Calu3 (cell line): ENCODE measurements at regions of chr11 and their contacts with region 1.

Region 1: DNA sequence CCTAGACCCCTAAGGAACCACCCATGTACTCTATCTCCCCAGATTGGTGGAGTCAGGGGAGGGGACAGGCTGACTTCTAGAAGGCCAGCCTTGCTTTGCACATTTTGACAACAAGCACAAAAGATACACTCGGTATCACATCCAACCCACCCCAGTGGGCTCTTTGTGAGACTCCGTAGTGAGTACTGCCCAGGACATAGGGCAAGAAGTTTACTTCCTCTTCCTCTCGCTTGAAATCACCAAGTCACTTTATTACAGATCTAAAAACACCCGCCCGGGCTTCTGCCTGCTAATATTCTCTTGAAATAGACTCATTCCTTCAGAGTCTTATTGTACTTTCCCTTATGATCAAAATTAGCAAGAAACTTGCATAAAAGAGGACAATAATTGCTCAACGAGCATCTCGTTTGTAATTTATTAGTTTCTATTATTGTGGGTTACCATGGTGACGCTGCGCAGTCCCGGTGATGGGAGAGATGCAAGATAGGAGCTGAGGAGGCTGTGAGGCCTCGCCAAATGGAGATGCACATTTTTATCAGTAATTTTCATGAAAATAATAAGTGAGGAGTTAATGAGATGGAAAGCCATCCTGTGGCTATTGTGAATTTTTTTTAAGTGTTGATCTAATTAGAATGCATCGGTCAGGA is 96.9 kb downstream of the FEZ1 start:
- DNase-seq: no peak
- H3K4me3 Mint-ChIP-seq: no peak overlapping the region
- H3K27ac Mint-ChIP-seq: no peak overlapping the region
- H3K4me1 Mint-ChIP-seq: no peaks in the 10 kb centered on the region
- H3K27me3 Mint-ChIP-seq: peaks cover 99% of the 10 kb centered on the region
- CTCF ChIP-seq: no peak

Region 2: GRCh38 chr11:125164422-125165110 is 234.6 kb before region 1 on chr11 and contains the start of gene PKNOX2:
- CTCF ChIA-PET with region 1: no interaction called
- intact Hi-C with region 1: loop called (anchors 5 kb)
- DNase-seq: peak; percentile 71
- H3K4me3 Mint-ChIP-seq: peak within 1 kb of the TSS; percentile 78
- H3K27ac Mint-ChIP-seq: no peak within 1 kb of the TSS
- H3K4me1 Mint-ChIP-seq: no peaks in the 10 kb centered on the region
- H3K27me3 Mint-ChIP-seq: peaks cover 100% of the 10 kb centered on the region
- CTCF ChIP-seq: no peak
- total RNA-seq, gene PKNOX2: not detected in 2 replicates